ENCODE measurements at regions of chr14 and their contacts with region 1.

Region 1: GRCh38 chr14:20461274-20462001 is at the start of gene PIP4P1:
- DNase-seq: peak; percentile 98
- H3K4me3 ChIP-seq: peak within 1 kb of the TSS; percentile 69 to 86 (median 82)
- H3K27ac ChIP-seq: peak within 1 kb of the TSS; percentile 95 to 99 (median 97)
- H3K4me1 ChIP-seq: peaks cover 10 to 29% (median 20%) of the 10 kb centered on the region in 4 donors
- H3K27me3 ChIP-seq: no peaks in the 10 kb centered on the region
- CTCF ChIP-seq: no peak
- EP300 ChIP-seq: peak; percentile 59
- POLR2A ChIP-seq: peak; percentile 74
- total RNA-seq, gene PIP4P1: 18.7 to 49.4 (median 31.1) TPM

Region 2: DNA sequence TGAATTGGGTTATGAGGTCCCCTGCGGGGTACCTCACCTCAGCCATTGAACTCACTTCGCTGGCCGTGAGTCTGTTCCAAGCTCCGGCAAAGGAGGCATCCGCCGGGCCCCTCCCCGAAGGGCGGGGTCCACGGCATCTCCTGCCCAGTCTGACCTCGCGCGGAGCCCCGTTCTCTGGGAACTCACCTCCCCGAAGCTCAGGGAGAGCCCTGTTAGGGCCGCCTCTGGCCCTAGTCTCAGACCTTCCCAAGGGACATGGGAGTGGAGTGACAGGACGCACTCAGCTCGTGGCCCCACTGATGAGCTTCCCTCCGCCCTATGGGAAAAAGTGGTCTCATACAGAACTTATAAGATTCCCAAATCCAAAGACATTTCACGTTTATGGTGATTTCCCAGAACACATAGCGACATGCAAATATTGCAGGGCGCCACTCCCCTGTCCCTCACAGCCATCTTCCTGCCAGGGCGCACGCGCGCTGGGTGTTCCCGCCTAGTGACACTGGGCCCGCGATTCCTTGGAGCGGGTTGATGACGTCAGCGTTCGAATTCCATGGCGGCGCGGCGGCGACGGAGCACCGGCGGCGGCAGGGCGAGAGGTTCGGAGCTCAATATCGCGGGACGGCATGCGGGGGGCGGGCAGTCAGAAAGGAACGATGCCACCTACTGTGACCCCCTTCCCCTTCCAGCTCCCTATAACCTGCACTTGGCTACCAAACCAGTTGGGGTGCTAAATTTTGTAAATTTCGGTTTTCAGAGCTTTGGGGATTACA is 118.2 kb before region 1 on chr14 and contains the start of gene PARP2:
- in situ Hi-C with region 1: loop called in 2 of 4 experiments (anchors 25 kb)
- intact Hi-C with region 1: loop called (anchors 10 kb)
- DNase-seq: peak; percentile 96
- H3K4me3 ChIP-seq: peak within 1 kb of the TSS; percentile 57 to 65 (median 60)
- H3K27ac ChIP-seq: peak within 1 kb of the TSS; percentile 94 to 98 (median 96)
- H3K4me1 ChIP-seq: peaks cover 0 to 7% (median 2%) of the 10 kb centered on the region in 4 donors
- H3K27me3 ChIP-seq: no peaks in the 10 kb centered on the region
- CTCF ChIP-seq: peak in 1 of 5 experiments; percentile 17
- EP300 ChIP-seq: no peak
- POLR2A ChIP-seq: peak; percentile 93
- total RNA-seq, gene PARP2: 4.4 to 96.5 (median 9.1) TPM

Region 3: DNA sequence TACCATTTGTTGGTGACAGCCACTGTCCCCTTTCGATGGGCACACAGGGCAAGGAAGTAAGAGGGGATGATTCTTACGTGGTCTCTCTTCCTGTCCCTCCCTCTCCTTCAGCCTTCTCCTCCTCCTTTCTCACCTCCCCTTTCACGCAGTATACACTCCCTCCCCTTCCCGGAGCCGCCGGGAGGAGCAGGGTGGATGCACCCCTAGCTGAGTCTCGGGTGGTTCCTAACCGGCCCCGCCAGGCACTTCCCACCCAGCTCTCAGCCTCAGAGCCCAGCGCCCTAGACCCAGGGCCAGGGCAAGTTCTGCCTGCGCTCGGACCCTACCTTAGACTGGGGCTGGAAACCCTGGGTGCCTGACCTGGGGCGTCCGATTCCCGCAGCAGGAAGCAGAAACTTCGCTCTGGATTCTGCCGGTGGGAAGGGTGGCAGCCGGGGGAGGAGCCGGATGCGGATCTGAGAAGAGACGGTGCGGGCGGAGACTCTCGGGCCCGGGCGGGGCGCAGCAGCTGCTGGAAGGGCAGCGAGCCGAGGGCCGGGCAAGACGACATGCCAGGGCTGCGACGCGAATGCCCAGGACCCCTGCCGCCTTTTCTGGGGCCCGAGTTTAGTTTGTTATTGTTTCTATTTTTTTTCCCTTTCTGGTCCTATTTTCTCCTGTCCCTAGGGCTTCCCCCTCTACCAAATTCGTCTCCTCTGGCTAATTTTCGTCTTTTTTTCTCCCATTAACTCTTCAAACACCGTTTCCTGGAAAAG is 48.2 kb before region 1 on chr14 and contains the start of gene TEP1:
- in situ Hi-C with region 1: loop called in 1 of 4 experiments (anchors 10 kb)
- intact Hi-C with region 1: no loop called
- DNase-seq: peak; percentile 94
- H3K4me3 ChIP-seq: peak within 1 kb of the TSS; percentile 65 to 93 (median 78)
- H3K27ac ChIP-seq: peak within 1 kb of the TSS; percentile 96 to 99 (median 98)
- H3K4me1 ChIP-seq: peaks cover 4 to 53% (median 39%) of the 10 kb centered on the region in 4 donors
- H3K27me3 ChIP-seq: no peaks in the 10 kb centered on the region
- CTCF ChIP-seq: peak in 1 of 5 experiments; percentile 30
- EP300 ChIP-seq: no peak
- POLR2A ChIP-seq: peak; percentile 97
- total RNA-seq, gene TEP1: 72.2 to 216 (median 79.9) TPM

Region 4: DNA sequence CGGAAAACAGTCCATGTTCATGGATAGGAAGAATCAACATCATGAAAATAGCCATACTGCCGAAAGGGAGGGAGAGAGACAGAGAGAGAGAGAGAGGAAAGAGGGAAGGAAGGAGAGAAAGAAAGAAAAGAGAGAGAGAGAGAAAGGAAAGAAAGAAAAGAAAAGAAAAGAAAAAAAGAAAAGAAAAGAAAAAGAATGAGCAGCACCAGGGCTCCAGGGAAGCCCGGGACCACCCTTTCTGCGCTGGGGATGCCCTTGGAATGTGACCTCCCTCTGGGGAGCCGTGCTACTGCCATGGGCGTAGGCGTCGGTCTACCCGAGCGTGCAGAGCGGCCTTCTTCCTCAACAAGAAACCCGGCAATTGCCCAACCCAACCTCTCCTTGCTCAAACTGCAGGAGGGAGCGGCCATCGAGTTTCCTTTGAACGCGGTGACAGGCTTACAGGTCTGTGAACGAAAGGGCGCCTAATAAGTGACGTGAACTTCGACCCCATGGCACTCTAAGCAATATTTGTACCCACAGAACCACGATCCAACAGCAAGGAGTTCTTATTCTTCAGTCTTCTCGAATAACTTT is 163.1 kb after region 1 on chr14:
- in situ Hi-C with region 1: loop called in 1 of 4 experiments (anchors 10 kb)
- intact Hi-C with region 1: loop called (anchors 10 kb)
- DNase-seq: peak; percentile 82
- H3K4me3 ChIP-seq: peak overlapping the region in 2 of 4 donors; percentile 2 to 31
- H3K27ac ChIP-seq: peak overlapping the region in 3 of 4 donors; percentile 17 to 50 (median 48)
- H3K4me1 ChIP-seq: peaks cover 0 to 22% (median 15%) of the 10 kb centered on the region in 4 donors
- H3K27me3 ChIP-seq: peaks cover 22% of the 10 kb centered on the region
- CTCF ChIP-seq: no peak
- EP300 ChIP-seq: no peak
- POLR2A ChIP-seq: no peak

Region 5: DNA sequence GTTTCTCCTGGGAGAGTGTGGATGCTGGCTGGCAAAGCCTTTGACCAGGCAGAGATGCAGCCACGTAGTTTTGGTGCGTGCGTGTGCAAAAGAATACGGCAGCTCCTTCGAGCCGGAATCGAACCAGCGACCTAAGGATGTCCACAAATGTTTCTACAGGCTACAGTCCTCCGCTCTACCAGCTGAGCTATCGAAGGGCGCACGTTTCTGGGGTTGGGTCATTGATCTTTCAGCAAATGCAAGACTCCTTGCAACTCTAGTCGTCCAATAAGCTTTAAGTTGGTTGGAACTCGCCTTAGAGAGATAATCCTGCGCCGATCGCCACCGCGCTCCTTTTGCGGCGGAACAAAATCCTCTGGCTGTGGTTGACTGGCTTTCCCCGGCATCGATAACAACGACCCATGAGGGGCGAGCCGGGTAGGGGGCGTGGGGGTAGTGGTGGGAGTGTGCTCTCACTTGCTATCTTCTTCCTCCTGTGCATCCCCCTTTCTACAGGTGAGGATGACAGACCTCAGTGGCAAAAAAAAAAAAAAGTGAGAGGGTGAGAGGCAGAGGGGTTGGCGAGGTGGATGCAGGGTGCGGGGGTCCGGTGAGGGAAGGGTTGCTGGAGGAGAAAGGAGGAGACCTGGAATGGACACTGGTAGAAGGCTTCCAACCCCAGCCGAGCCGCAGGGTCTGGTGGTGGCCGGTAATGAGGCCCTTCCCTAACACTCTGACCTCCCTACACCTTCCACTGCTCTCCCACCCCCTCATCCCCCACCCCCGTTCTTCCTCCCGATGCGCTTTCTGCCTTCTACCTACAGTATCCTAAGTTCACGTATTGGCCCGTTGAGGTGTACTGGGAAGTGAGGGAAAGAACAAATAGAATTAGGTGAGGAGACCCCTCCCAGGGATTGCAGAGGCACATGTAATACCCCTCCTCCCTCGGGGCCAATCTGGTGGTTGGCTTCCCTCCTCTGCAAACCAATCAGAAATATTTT is 191.8 kb after region 1 on chr14:
- in situ Hi-C with region 1: no loop called
- intact Hi-C with region 1: no loop called
- DNase-seq: no peak
- H3K4me3 ChIP-seq: no peak overlapping the region
- H3K27ac ChIP-seq: no peak overlapping the region
- H3K4me1 ChIP-seq: peaks cover 0 to 4% (median 0%) of the 10 kb centered on the region in 4 donors
- H3K27me3 ChIP-seq: peaks cover 90% of the 10 kb centered on the region
- CTCF ChIP-seq: no peak
- EP300 ChIP-seq: no peak
- POLR2A ChIP-seq: no peak

Region 6: GRCh38 chr14:22276913-22277816 is 1815.7 kb after region 1 on chr14:
- in situ Hi-C with region 1: no loop called
- intact Hi-C with region 1: no loop called
- DNase-seq: no peak
- H3K4me3 ChIP-seq: no peak overlapping the region
- H3K27ac ChIP-seq: no peak overlapping the region
- H3K4me1 ChIP-seq: no peaks in the 10 kb centered on the region
- H3K27me3 ChIP-seq: peaks cover 11% of the 10 kb centered on the region
- CTCF ChIP-seq: peak; percentile 36 to 57 (median 44)
- EP300 ChIP-seq: no peak
- POLR2A ChIP-seq: no peak

Measured in transverse colon (tissue), 4 donors.